Sciatic nerve (tissue), 2 donors: ENCODE measurements at regions of chr11 and their contacts with region 1.

Region 1: DNA sequence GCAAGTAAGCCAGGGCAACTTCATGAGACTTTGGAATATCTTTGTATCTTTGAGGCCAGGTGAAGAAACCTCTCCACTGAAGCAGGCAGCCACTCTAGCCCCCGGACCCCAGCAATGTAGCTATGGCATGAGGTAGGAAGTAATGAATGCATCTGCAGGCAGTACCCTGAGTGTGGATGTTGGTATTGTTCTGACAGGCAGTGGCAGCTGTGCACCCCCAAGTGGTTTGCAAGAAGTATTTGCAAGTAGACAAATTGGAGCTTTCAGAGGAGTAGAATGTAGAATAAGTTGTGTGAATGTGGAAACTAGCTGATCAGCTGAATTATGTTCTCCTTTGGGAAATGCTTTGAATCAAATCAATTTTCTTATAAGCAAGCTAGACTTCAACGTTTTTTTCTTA is 194.4 kb upstream of the PGR start:
- DNase-seq: no peak
- ATAC-seq: no peak

Region 2: GRCh38 chr11:99406345-99406744 is 1917.7 kb before region 1 on chr11:
- intact Hi-C with region 1: loop called (anchors 10 kb)
- DNase-seq: no peak
- ATAC-seq: peak; percentile 30

Region 3: DNA sequence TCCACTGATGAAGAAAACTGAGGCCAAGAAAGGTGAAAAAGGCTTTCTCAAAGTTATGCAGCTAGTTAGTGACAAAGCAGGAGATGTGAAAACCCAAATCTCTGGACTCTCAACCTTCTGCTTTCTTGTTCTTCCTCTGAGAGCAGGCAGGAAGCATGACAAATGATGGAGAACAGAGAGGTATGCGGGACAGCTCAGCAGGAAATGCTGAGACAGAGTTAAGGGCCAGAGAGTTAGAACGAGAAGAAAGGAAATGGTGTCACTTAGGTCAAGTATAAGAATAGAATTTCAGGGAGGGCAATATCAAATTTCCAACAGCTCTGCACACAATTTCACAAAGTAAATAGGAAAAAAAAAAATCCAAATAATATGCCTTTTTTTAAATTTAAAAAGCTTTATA is 704.5 kb before region 1 on chr11:
- intact Hi-C with region 1: no loop called
- DNase-seq: no peak
- ATAC-seq: no peak